T-cell (primary cell): ENCODE measurements at regions of chr15 and their contacts with region 1.

Region 1: GRCh38 chr15:80109388-80109787 is 43.4 kb upstream of the FAH start:
- DNase-seq: no peak
- ATAC-seq: no peak
- H3K4me3 ChIP-seq: no peak overlapping the region
- H3K4me3 Mint-ChIP-seq: no peak overlapping the region
- H3K27ac ChIP-seq: no peak overlapping the region
- H3K27ac Mint-ChIP-seq: no peak overlapping the region
- H3K4me1 ChIP-seq: no peaks in the 10 kb centered on the region
- H3K4me1 Mint-ChIP-seq: peaks cover 49 to 64% (median 50%) of the 10 kb centered on the region in 3 donors
- H3K27me3 ChIP-seq: no peaks in the 10 kb centered on the region
- H3K27me3 Mint-ChIP-seq: no peaks in the 10 kb centered on the region

Region 2: DNA sequence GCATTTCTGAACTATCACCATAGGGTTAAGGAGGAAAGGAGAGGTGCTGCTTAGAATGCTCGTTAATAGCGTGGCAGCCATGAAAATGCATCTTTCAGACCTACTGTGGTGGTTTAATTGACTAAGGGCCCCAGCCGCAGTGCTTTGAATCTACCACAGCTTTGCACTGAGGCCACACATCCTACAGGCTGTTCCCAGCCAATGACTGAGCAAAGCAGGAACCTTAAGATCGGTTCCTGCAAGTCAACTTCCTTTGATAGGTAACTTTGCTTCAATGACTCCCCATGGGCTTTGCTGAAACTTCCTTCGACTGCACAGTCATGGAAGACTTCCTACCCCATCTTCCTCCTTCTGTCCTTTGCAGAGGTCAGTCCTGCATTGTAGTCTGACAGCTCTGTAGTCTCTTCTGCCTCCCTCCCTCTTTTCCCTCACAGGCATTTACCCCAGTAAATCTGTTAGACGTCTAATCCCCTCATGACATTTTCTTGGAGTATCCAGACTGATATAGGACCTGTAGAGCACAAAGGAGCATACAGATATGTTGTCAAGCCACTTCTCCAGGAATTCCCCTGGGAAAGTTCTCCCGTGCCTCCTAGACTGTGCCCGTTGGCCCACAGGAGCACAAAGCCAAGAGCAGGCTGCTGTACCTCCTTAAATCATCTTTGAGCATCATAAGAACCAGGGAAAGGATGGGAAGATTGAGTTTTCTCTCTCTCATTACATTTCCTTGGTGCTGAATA is 135.8 kb before region 1 on chr15:
- CTCF ChIA-PET with region 1: interaction called in 1 of 2 experiments, 10 read pairs
- POLR2A ChIA-PET with region 1: no interaction called
- DNase-seq: no peak
- ATAC-seq: no peak
- H3K4me3 ChIP-seq: no peak overlapping the region
- H3K4me3 Mint-ChIP-seq: no peak overlapping the region
- H3K27ac ChIP-seq: no peak overlapping the region
- H3K27ac Mint-ChIP-seq: no peak overlapping the region
- H3K4me1 ChIP-seq: peaks cover 17 to 19% of the 10 kb centered on the region in 2 experiments
- H3K4me1 Mint-ChIP-seq: peaks cover 23 to 36% (median 31%) of the 10 kb centered on the region in 3 donors
- H3K27me3 ChIP-seq: no peaks in the 10 kb centered on the region
- H3K27me3 Mint-ChIP-seq: no peaks in the 10 kb centered on the region